ENCODE measurements at regions of chr21 and their contacts with region 1.

Region 1: DNA sequence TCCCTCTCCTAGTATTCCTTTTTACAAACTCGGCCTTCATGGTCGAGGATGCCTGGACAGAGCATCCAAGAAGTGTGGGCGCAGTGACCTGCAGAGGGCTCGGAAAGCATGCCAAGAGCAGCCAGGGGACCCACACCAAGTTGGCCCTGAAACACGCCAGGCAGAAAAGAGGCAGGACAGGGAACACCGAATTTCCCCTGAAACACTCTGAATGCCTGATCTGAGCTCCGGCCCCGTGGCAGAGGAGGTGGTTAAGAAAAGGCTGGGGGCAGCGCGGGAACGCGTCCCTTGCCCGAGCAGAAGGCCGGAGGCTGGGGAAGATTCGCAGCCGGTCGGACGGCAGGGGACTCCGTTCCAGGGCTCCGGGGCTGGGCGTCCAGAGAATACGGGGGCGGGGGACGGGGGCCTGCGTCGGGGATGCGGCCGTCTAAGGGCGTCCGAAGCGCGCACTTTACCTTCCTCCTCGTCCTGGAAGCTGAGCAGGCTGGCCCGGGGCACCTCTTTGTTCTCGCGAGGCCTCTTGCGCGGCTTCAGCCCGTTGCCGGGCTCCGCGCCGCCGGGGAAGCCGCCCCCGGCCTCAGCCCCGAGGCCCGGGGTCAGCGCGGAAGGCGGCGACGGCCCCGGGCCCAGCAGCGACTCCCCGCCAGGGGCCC is 558 bp downstream of the PAXBP1 start:
- DNase-seq: no peak
- ATAC-seq: peak; percentile 37
- H3K4me3 Mint-ChIP-seq: peak overlapping the region; percentile 96
- H3K27ac Mint-ChIP-seq: peak overlapping the region; percentile 88
- H3K4me1 Mint-ChIP-seq: peaks cover 45% of the 10 kb centered on the region
- H3K27me3 Mint-ChIP-seq: peaks cover 2% of the 10 kb centered on the region
- CTCF ChIP-seq: no peak

Region 2: DNA sequence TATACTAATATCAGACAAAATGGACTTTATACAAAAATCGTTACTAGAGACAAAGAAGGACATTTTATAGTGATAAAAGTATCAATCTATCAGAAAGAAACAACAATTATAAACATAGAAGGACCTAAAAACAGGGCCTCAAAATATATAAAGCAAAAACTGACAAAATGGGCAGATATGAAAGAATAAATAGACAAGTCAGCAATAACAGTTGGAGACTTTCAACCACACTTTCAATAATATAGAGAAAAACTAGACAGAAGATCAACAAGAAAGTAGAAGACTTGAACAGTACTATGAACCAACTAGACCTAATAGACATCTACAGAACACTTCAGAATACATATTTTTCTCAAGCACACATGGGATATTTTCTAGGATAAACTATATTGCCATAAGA is 544.6 kb before region 1 on chr21:
- CTCF ChIA-PET with region 1: no interaction called
- POLR2A ChIA-PET with region 1: no interaction called
- intact Hi-C with region 1: no loop called
- DNase-seq: no peak
- ATAC-seq: no peak
- H3K4me3 Mint-ChIP-seq: no peak overlapping the region
- H3K27ac Mint-ChIP-seq: no peak overlapping the region
- H3K4me1 Mint-ChIP-seq: no peaks in the 10 kb centered on the region
- H3K27me3 Mint-ChIP-seq: no peaks in the 10 kb centered on the region
- CTCF ChIP-seq: no peak

Region 3: DNA sequence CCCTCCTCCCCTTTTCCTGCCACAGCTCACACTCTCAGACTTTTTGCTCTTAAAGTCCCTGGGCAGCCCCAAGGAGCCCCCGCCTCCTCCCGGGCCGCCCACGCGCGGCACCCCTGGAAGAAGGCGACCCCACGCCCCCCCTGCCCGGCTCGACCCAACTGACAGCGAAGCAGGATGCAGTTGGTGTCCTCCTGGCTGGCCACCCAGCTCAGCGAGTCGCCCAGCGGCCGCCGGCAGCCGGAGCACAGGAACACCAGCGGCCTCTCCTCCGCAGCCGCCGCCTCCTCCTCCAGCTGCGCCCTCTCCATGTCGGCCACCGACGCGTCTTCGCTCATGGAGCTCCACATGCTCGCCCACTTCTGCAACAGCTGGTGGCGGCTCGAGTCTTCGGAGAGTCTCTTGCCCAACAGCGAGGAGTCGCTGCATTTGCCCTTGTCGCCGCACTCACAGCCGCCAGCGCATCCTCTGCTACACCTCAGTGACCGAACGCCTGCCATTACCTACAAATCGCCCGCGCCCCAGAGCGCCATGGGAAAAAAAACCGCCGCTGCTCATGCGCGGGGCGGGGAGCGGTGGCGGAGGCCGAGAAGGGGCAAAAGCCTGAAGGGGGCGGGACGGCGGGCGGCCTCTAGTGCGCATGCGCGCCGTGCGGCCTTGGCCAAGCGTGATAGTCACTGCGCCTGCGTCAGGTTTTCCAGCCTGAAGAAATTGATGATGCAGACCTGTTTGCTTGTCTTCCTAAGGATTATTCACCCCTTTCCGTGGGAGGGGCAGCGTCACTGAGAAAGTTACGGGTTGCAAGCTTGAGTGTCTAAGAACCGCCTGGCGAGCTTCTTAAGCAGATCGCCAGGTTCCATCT is 492.2 kb before region 1 on chr21 and contains the start of gene MIS18A:
- CTCF ChIA-PET with region 1: no interaction called
- POLR2A ChIA-PET with region 1: interaction called, 4 read pairs
- intact Hi-C with region 1: loop called (anchors 5 kb)
- DNase-seq: peak; percentile 96
- ATAC-seq: peak; percentile 96
- H3K4me3 Mint-ChIP-seq: peak within 1 kb of the TSS; percentile 98
- H3K27ac Mint-ChIP-seq: peak within 1 kb of the TSS; percentile 88
- H3K4me1 Mint-ChIP-seq: peaks cover 16% of the 10 kb centered on the region
- H3K27me3 Mint-ChIP-seq: no peaks in the 10 kb centered on the region
- CTCF ChIP-seq: no peak
- total RNA-seq, gene MIS18A: 6.8 and 7.7 TPM in 2 replicates

Region 4: GRCh38 chr21:32612075-32612998 is 158.7 kb before region 1 on chr21 and contains the start of gene CFAP298:
- CTCF ChIA-PET with region 1: interaction called, 3 read pairs
- POLR2A ChIA-PET with region 1: interaction called, 14 read pairs
- intact Hi-C with region 1: loop called (anchors 1 kb)
- DNase-seq: peak; percentile 83
- ATAC-seq: peak; percentile 89
- H3K4me3 Mint-ChIP-seq: peak within 1 kb of the TSS; percentile 97
- H3K27ac Mint-ChIP-seq: peak within 1 kb of the TSS; percentile 96
- H3K4me1 Mint-ChIP-seq: peaks cover 12% of the 10 kb centered on the region
- H3K27me3 Mint-ChIP-seq: no peaks in the 10 kb centered on the region
- CTCF ChIP-seq: no peak
- total RNA-seq, gene CFAP298: 36.4 and 37.3 TPM in 2 replicates

Region 5: DNA sequence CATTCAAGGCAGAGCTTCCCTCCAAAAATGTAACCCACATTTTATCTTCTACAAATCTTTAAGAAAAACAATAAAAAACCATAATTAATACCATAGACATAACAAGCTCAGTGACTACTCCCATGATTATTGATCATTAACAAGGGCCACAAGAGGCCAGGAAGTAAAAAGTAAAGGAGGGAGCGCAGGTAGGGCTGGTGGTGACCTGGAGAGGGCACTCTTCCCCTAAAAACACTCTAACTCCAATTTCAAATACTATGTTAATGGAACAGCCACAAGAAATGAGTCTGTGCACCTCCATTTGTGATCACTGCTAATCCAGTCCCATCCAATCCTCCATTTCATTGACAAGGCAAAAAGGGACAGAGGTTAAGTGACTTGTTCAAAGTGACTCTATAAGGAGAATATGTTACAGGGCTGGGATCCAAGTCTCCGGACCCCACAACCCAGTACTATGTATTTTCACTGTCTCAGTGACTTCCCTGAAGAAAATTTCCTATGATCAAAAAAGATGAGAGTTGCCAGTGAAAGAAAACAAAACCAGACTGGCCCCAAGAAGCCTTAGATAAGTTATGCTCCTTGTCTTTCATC is 117.6 kb before region 1 on chr21:
- CTCF ChIA-PET with region 1: no interaction called
- POLR2A ChIA-PET with region 1: interaction called, 10 read pairs
- intact Hi-C with region 1: loop called (anchors 2 kb)
- DNase-seq: no peak
- ATAC-seq: peak; percentile 52
- H3K4me3 Mint-ChIP-seq: no peak overlapping the region
- H3K27ac Mint-ChIP-seq: no peak overlapping the region
- H3K4me1 Mint-ChIP-seq: no peaks in the 10 kb centered on the region
- H3K27me3 Mint-ChIP-seq: no peaks in the 10 kb centered on the region
- CTCF ChIP-seq: no peak

Region 6: GRCh38 chr21:32712043-32712442 is 59.0 kb before region 1 on chr21:
- CTCF ChIA-PET with region 1: interaction called, 3 read pairs
- POLR2A ChIA-PET with region 1: interaction called, 17 read pairs
- intact Hi-C with region 1: loop called (anchors 1 kb)
- DNase-seq: peak; percentile 32
- ATAC-seq: peak; percentile 95
- H3K4me3 Mint-ChIP-seq: peak overlapping the region; percentile 24
- H3K27ac Mint-ChIP-seq: no peak overlapping the region
- H3K4me1 Mint-ChIP-seq: peaks cover 20% of the 10 kb centered on the region
- H3K27me3 Mint-ChIP-seq: peaks cover 42% of the 10 kb centered on the region
- CTCF ChIP-seq: no peak

Region 7: GRCh38 chr21:33479679-33480480 is 708.9 kb after region 1 on chr21 and contains the start of gene TMEM50B:
- CTCF ChIA-PET with region 1: interaction called, 3 read pairs
- POLR2A ChIA-PET with region 1: interaction called, 9 read pairs
- intact Hi-C with region 1: loop called (anchors 1 kb)
- DNase-seq: peak; percentile 88
- ATAC-seq: peak; percentile 88
- H3K4me3 Mint-ChIP-seq: peak within 1 kb of the TSS; percentile 92
- H3K27ac Mint-ChIP-seq: peak within 1 kb of the TSS; percentile 90
- H3K4me1 Mint-ChIP-seq: peaks cover 20% of the 10 kb centered on the region
- H3K27me3 Mint-ChIP-seq: no peaks in the 10 kb centered on the region
- CTCF ChIP-seq: no peak
- total RNA-seq, gene TMEM50B: 42.3 and 47.2 TPM in 2 replicates

Measured in activated B cell treated with CpG ODN at 0.5 μM for 24 hours (primary cell).